ENCODE measurements at regions of chr5 and their contacts with region 1.

Region 1: GRCh38 chr5:64207978-64208377 is 42.3 kb downstream of the RNF180 start:
- DNase-seq: no peak
- H3K4me3 ChIP-seq: no peak overlapping the region
- H3K27ac ChIP-seq: no peak overlapping the region
- H3K4me1 ChIP-seq: peaks cover 0 to 6% (median 2%) of the 10 kb centered on the region in 4 donors
- H3K27me3 ChIP-seq: no peaks in the 10 kb centered on the region
- CTCF ChIP-seq: peak in 2 of 4 experiments; percentile 10 to 26
- EP300 ChIP-seq: no peak
- POLR2A ChIP-seq: no peak

Region 2: GRCh38 chr5:64147849-64148441 is 60.0 kb before region 1 on chr5:
- intact Hi-C with region 1: loop called (anchors 5 kb)
- DNase-seq: peak; percentile 73
- H3K4me3 ChIP-seq: no peak overlapping the region
- H3K27ac ChIP-seq: no peak overlapping the region
- H3K4me1 ChIP-seq: peaks cover 0 to 29% (median 20%) of the 10 kb centered on the region in 4 donors
- H3K27me3 ChIP-seq: no peaks in the 10 kb centered on the region
- CTCF ChIP-seq: peak; percentile 51 to 71 (median 66)
- EP300 ChIP-seq: no peak
- POLR2A ChIP-seq: no peak